Common myeloid progenitor, CD34-positive (primary cell): ENCODE measurements at regions of chrX and their contacts with region 1.

Region 1: GRCh38 chrX:134969726-134970125 is 21.1 kb upstream of the SMIM10 start:
- DNase-seq: no peak
- H3K4me3 ChIP-seq: no peak overlapping the region
- H3K27ac ChIP-seq: no peak overlapping the region
- H3K4me1 ChIP-seq: no peaks in the 10 kb centered on the region
- H3K27me3 ChIP-seq: peaks cover 0 to 3% (median 0%) of the 10 kb centered on the region in 5 experiments

Region 2: GRCh38 chrX:134855751-134856150 is 114.0 kb before region 1 on chrX:
- CTCF ChIA-PET with region 1: no interaction called
- POLR2A ChIA-PET with region 1: no interaction called
- DNase-seq: no peak
- H3K4me3 ChIP-seq: no peak overlapping the region
- H3K27ac ChIP-seq: no peak overlapping the region
- H3K4me1 ChIP-seq: peaks cover 0 to 6% (median 3%) of the 10 kb centered on the region in 4 experiments
- H3K27me3 ChIP-seq: no peaks in the 10 kb centered on the region

Region 3: DNA sequence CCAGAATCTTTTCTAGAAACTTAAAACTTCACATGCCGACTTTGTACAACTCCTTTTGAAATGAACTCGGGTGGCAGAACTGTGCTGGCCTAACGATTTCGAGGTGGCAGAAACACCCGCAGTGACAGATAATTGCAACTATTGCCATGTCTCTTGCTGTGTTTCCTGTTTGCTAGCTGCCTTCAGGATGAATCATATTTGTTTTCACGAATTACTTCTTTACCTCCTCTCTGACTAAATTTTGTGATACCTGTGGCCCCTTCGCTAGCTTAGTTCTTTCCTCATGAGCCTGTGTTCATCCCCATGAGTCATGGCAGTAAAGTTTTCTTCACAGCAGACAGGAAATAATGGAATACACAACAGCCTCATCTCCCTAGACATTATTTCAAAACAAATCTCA is 83.5 kb before region 1 on chrX:
- CTCF ChIA-PET with region 1: no interaction called
- POLR2A ChIA-PET with region 1: no interaction called
- DNase-seq: no peak
- H3K4me3 ChIP-seq: no peak overlapping the region
- H3K27ac ChIP-seq: no peak overlapping the region
- H3K4me1 ChIP-seq: peaks cover 0 to 6% (median 0%) of the 10 kb centered on the region in 4 experiments
- H3K27me3 ChIP-seq: peaks cover 0 to 2% (median 0%) of the 10 kb centered on the region in 5 experiments

Region 4: GRCh38 chrX:134957836-134958235 is 11.9 kb before region 1 on chrX:
- CTCF ChIA-PET with region 1: no interaction called
- POLR2A ChIA-PET with region 1: no interaction called
- DNase-seq: no peak
- H3K4me3 ChIP-seq: no peak overlapping the region
- H3K27ac ChIP-seq: no peak overlapping the region
- H3K4me1 ChIP-seq: no peaks in the 10 kb centered on the region
- H3K27me3 ChIP-seq: peaks cover 0 to 15% (median 3%) of the 10 kb centered on the region in 5 experiments

Region 5: GRCh38 chrX:134999469-134999868 is 29.7 kb after region 1 on chrX:
- CTCF ChIA-PET with region 1: interaction called, 17 read pairs
- POLR2A ChIA-PET with region 1: no interaction called
- DNase-seq: peak; percentile 29 to 55 (median 53)
- H3K4me3 ChIP-seq: no peak overlapping the region
- H3K27ac ChIP-seq: no peak overlapping the region
- H3K4me1 ChIP-seq: peaks cover 0 to 4% (median 2%) of the 10 kb centered on the region in 4 experiments
- H3K27me3 ChIP-seq: peaks cover 0 to 3% (median 0%) of the 10 kb centered on the region in 5 experiments